CD4-positive, alpha-beta memory T cell (primary cell): ENCODE measurements at regions of chr14 and their contacts with region 1.

Region 1: GRCh38 chr14:101761032-101761880 is at the start of gene PPP2R5C:
- DNase-seq: peak; percentile 86 to 90 (median 87)
- H3K4me3 ChIP-seq: peak within 1 kb of the TSS; percentile 49 to 94
- H3K4me3 Mint-ChIP-seq: peak within 1 kb of the TSS; percentile 92 to 96 (median 94)
- H3K27ac ChIP-seq: peak within 1 kb of the TSS; percentile 82
- H3K27ac Mint-ChIP-seq: peak within 1 kb of the TSS; percentile 92 to 96 (median 95)
- H3K4me1 ChIP-seq: peaks cover 44% of the 10 kb centered on the region
- H3K4me1 Mint-ChIP-seq: peaks cover 32 to 45% (median 39%) of the 10 kb centered on the region in 4 donors
- H3K27me3 ChIP-seq: no peaks in the 10 kb centered on the region
- H3K27me3 Mint-ChIP-seq: no peaks in the 10 kb centered on the region
- total RNA-seq, gene PPP2R5C: 584 to 620 TPM

Region 2: DNA sequence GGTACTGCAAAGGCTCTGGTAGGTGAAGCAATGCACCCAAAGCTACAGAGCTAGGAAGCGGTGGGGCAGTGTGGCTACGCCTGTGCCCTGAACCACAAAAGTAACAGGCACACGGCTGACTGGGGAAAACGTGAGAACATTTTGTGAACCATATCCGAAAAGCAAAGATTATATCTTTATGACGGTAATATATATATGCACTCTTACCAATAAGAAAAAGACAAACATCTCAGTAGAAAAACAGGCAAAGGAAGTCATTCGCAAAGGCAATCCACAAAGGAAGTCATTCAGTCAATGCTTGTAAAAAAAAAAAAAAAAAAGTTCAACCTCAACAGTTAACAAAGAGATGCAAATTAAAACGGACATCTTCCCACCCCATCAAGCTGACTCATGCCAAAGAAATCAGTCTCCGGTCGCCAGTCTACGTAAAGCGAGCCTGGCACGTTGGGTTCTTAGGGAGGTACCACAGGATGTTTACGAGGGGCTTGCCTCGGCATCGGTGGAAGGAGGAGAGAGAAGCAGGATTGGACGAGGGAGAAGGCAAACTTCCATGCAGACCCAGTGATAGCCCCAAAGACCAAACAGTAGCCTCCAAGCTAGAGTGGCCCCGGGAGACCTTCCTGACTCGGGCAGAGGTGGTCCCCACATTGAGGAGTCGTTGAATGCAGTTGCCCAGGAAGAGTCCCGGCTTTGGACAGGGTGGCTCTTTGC is 39.1 kb before region 1 on chr14:
- CTCF ChIA-PET with region 1: interaction called, 4 read pairs
- POLR2A ChIA-PET with region 1: interaction called, 76 read pairs
- intact Hi-C with region 1: loop called (anchors 1 kb)
- DNase-seq: peak; percentile 90 to 93 (median 91)
- H3K4me3 ChIP-seq: peak overlapping the region in 1 of 2 donors; percentile 55
- H3K4me3 Mint-ChIP-seq: peak overlapping the region; percentile 66 to 92 (median 82)
- H3K27ac ChIP-seq: peak overlapping the region; percentile 84
- H3K27ac Mint-ChIP-seq: peak overlapping the region; percentile 92 to 100 (median 97)
- H3K4me1 ChIP-seq: peaks cover 61% of the 10 kb centered on the region
- H3K4me1 Mint-ChIP-seq: peaks cover 35 to 69% (median 46%) of the 10 kb centered on the region in 4 donors
- H3K27me3 ChIP-seq: no peaks in the 10 kb centered on the region
- H3K27me3 Mint-ChIP-seq: no peaks in the 10 kb centered on the region

Region 3: GRCh38 chr14:101774006-101774795 is 12.9 kb after region 1 on chr14:
- CTCF ChIA-PET with region 1: interaction called, 14 read pairs
- POLR2A ChIA-PET with region 1: interaction called, 12 read pairs
- intact Hi-C with region 1: no loop called
- DNase-seq: no peak
- H3K4me3 ChIP-seq: no peak overlapping the region
- H3K4me3 Mint-ChIP-seq: no peak overlapping the region
- H3K27ac ChIP-seq: no peak overlapping the region
- H3K27ac Mint-ChIP-seq: peak overlapping the region in 3 of 7 donors; percentile 5 to 69 (median 42)
- H3K4me1 ChIP-seq: peaks cover 13% of the 10 kb centered on the region
- H3K4me1 Mint-ChIP-seq: peaks cover 14 to 42% (median 27%) of the 10 kb centered on the region in 4 donors
- H3K27me3 ChIP-seq: no peaks in the 10 kb centered on the region
- H3K27me3 Mint-ChIP-seq: no peaks in the 10 kb centered on the region

Region 4: GRCh38 chr14:101784631-101785030 is 23.4 kb after region 1 on chr14:
- CTCF ChIA-PET with region 1: no interaction called
- POLR2A ChIA-PET with region 1: no interaction called
- intact Hi-C with region 1: no loop called
- DNase-seq: no peak
- H3K4me3 ChIP-seq: no peak overlapping the region
- H3K4me3 Mint-ChIP-seq: no peak overlapping the region
- H3K27ac ChIP-seq: no peak overlapping the region
- H3K27ac Mint-ChIP-seq: peak overlapping the region in 2 of 7 donors; percentile 33 to 66
- H3K4me1 ChIP-seq: peaks cover 8% of the 10 kb centered on the region
- H3K4me1 Mint-ChIP-seq: peaks cover 9 to 14% (median 13%) of the 10 kb centered on the region in 4 donors
- H3K27me3 ChIP-seq: no peaks in the 10 kb centered on the region
- H3K27me3 Mint-ChIP-seq: no peaks in the 10 kb centered on the region

Region 5: DNA sequence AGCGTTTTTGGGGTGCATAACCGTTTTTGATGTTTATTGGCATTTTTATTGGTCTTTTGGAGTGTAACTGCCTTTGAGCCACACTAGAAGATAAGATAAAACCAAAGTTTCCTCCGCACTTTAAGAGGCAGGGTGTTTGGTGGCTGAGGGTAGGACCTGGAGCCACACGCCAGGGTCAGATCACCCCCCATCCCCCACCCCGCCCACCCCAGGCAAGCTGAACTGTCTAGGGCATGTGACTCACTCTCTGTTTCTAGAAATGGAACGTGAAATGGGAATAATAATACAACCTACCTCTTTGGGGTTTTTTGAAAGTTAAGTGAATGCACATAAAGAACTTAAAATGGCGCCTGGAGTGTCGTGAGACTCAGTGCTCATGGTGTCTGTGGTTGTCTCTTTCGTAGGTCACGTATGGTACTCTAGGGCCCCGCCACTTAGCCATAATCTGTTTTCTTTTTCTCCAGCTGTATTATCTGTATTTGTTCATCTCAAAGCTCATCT is 56.3 kb after region 1 on chr14:
- CTCF ChIA-PET with region 1: interaction called, 3 read pairs
- POLR2A ChIA-PET with region 1: interaction called, 21 read pairs
- intact Hi-C with region 1: no loop called
- DNase-seq: peak; percentile 62 to 80 (median 74)
- H3K4me3 ChIP-seq: peak overlapping the region; percentile 5 to 41
- H3K4me3 Mint-ChIP-seq: peak overlapping the region; percentile 77 to 94 (median 86)
- H3K27ac ChIP-seq: peak overlapping the region; percentile 98
- H3K27ac Mint-ChIP-seq: peak overlapping the region; percentile 97 to 100 (median 100)
- H3K4me1 ChIP-seq: peaks cover 96% of the 10 kb centered on the region
- H3K4me1 Mint-ChIP-seq: peaks cover 74 to 94% (median 83%) of the 10 kb centered on the region in 4 donors
- H3K27me3 ChIP-seq: no peaks in the 10 kb centered on the region
- H3K27me3 Mint-ChIP-seq: no peaks in the 10 kb centered on the region

Region 6: GRCh38 chr14:101964297-101965144 is 203.3 kb after region 1 on chr14 and contains the start of gene DYNC1H1:
- CTCF ChIA-PET with region 1: no interaction called
- POLR2A ChIA-PET with region 1: interaction called, 6 read pairs
- intact Hi-C with region 1: loop called (anchors 2 kb)
- DNase-seq: peak; percentile 85 to 92 (median 89)
- H3K4me3 ChIP-seq: peak within 1 kb of the TSS; percentile 45 to 82
- H3K4me3 Mint-ChIP-seq: peak within 1 kb of the TSS; percentile 89 to 92 (median 91)
- H3K27ac ChIP-seq: peak within 1 kb of the TSS; percentile 79
- H3K27ac Mint-ChIP-seq: peak within 1 kb of the TSS; percentile 92 to 96 (median 93)
- H3K4me1 ChIP-seq: peaks cover 46% of the 10 kb centered on the region
- H3K4me1 Mint-ChIP-seq: peaks cover 27 to 61% (median 43%) of the 10 kb centered on the region in 4 donors
- H3K27me3 ChIP-seq: no peaks in the 10 kb centered on the region
- H3K27me3 Mint-ChIP-seq: no peaks in the 10 kb centered on the region
- total RNA-seq, gene DYNC1H1: 314 to 318 TPM

Region 7: GRCh38 chr14:102139248-102140026 is 378.2 kb after region 1 on chr14 and contains the start of gene WDR20:
- CTCF ChIA-PET with region 1: no interaction called
- POLR2A ChIA-PET with region 1: no interaction called
- intact Hi-C with region 1: loop called (anchors 5 kb)
- DNase-seq: peak; percentile 98 to 100 (median 100)
- H3K4me3 ChIP-seq: peak within 1 kb of the TSS; percentile 65 to 91
- H3K4me3 Mint-ChIP-seq: peak within 1 kb of the TSS; percentile 97 to 99 (median 98)
- H3K27ac ChIP-seq: peak within 1 kb of the TSS; percentile 92
- H3K27ac Mint-ChIP-seq: peak within 1 kb of the TSS; percentile 95 to 98 (median 97)
- H3K4me1 ChIP-seq: peaks cover 30% of the 10 kb centered on the region
- H3K4me1 Mint-ChIP-seq: peaks cover 19 to 25% (median 21%) of the 10 kb centered on the region in 4 donors
- H3K27me3 ChIP-seq: no peaks in the 10 kb centered on the region
- H3K27me3 Mint-ChIP-seq: no peaks in the 10 kb centered on the region
- total RNA-seq, gene WDR20: 56.8 to 57.9 TPM